ENCODE measurements at regions of chr7 and their contacts with region 1.

Region 1: DNA sequence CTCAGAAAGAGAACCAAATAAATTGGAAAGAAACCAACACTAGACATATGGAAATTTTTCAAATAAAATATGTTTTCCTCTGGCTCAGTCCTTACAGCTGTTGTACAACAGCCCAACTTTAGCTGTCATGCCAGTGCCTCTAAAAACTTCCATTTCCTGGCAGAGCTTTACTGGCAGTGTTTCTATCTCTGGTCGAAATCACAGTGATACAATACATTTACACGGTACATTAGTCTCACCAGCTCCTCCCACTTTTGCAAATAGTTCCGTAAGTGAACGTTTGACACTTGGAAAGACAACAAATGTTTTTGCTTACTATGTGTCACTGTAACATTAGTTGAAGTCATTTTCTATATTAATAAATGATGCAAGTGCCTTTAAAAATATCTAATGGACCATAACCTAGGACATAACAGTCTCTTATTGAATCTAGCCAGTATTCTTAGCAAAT is 29.8 kb downstream of the BCAP29 start:
- DNase-seq: no peak
- ATAC-seq: no peak
- H3K4me3 ChIP-seq: no peak overlapping the region
- H3K27ac ChIP-seq: no peak overlapping the region
- H3K4me1 ChIP-seq: peaks cover 8% of the 10 kb centered on the region
- H3K27me3 ChIP-seq: no peaks in the 10 kb centered on the region
- CTCF ChIP-seq: no peak
- POLR2A ChIP-seq: no peak
- RAD21 ChIP-seq: no peak

Region 2: GRCh38 chr7:107643407-107643806 is 33.6 kb after region 1 on chr7:
- CTCF ChIA-PET with region 1: interaction called, 10 read pairs
- POLR2A ChIA-PET with region 1: no interaction called
- dilution Hi-C with region 1: no loop called
- in situ Hi-C with region 1: no loop called
- intact Hi-C with region 1: no loop called
- DNase-seq: peak; percentile 78
- ATAC-seq: peak; percentile 96
- H3K4me3 ChIP-seq: no peak overlapping the region
- H3K27ac ChIP-seq: no peak overlapping the region
- H3K4me1 ChIP-seq: no peaks in the 10 kb centered on the region; the same call in 1 of the 2 replicates
- H3K27me3 ChIP-seq: no peaks in the 10 kb centered on the region
- CTCF ChIP-seq: peak; percentile 49
- POLR2A ChIP-seq: no peak
- RAD21 ChIP-seq: peak; percentile 31; the same call in 1 of the 2 replicates

Region 3: GRCh38 chr7:107711301-107711700 is 101.5 kb after region 1 on chr7:
- CTCF ChIA-PET with region 1: no interaction called
- POLR2A ChIA-PET with region 1: no interaction called
- dilution Hi-C with region 1: no loop called
- in situ Hi-C with region 1: no loop called
- intact Hi-C with region 1: no loop called
- DNase-seq: peak; percentile 85
- ATAC-seq: peak; percentile 91
- H3K4me3 ChIP-seq: no peak overlapping the region
- H3K27ac ChIP-seq: no peak overlapping the region
- H3K4me1 ChIP-seq: peaks cover 2% of the 10 kb centered on the region; the same call in 1 of the 2 replicates
- H3K27me3 ChIP-seq: no peaks in the 10 kb centered on the region
- CTCF ChIP-seq: no peak
- POLR2A ChIP-seq: no peak
- RAD21 ChIP-seq: no peak

Measured in IMR-90 (cell line).